A673 (cell line): ENCODE measurements at regions of chr10 and their contacts with region 1.

Region 1: GRCh38 chr10:72772031-72772430 is 80.1 kb downstream of the MCU start:
- DNase-seq: peak; percentile 76
- H3K4me3 ChIP-seq: no peak overlapping the region
- H3K27ac ChIP-seq: peak overlapping the region; percentile 38
- H3K4me1 ChIP-seq: peaks cover 10% of the 10 kb centered on the region
- H3K27me3 ChIP-seq: no peaks in the 10 kb centered on the region
- CTCF ChIP-seq: no peak

Region 2: GRCh38 chr10:72605122-72605521 is 166.9 kb before region 1 on chr10:
- CTCF ChIA-PET with region 1: no interaction called
- POLR2A ChIA-PET with region 1: no interaction called
- intact Hi-C with region 1: no loop called
- DNase-seq: no peak
- H3K4me3 ChIP-seq: no peak overlapping the region
- H3K27ac ChIP-seq: no peak overlapping the region
- H3K4me1 ChIP-seq: no peaks in the 10 kb centered on the region
- H3K27me3 ChIP-seq: no peaks in the 10 kb centered on the region
- CTCF ChIP-seq: no peak

Region 3: DNA sequence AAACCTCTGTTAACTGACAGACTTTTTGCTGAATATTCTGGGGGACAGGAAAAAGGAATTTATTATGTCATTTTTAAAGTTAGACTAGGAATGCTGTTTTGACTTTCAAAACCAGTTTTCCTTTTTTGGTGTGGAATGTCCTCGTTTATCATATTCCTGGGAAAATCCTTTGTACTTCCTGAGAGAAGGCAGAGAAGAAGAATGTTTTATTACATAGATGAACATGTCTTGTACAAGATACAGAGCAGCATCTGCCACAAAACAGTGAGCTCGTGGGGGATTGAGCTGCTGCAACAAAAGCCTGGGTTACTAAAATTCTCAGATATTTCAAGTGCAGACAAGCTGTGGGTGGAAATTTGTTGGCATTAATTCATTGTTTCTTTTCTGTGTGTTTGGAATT is 59.9 kb before region 1 on chr10:
- CTCF ChIA-PET with region 1: no interaction called
- POLR2A ChIA-PET with region 1: no interaction called
- intact Hi-C with region 1: loop called (anchors 5 kb)
- DNase-seq: no peak
- H3K4me3 ChIP-seq: no peak overlapping the region
- H3K27ac ChIP-seq: no peak overlapping the region
- H3K4me1 ChIP-seq: peaks cover 24% of the 10 kb centered on the region
- H3K27me3 ChIP-seq: no peaks in the 10 kb centered on the region
- CTCF ChIP-seq: no peak

Region 4: GRCh38 chr10:72893136-72893798 is 121.2 kb after region 1 on chr10 and contains the start of gene OIT3:
- CTCF ChIA-PET with region 1: no interaction called
- POLR2A ChIA-PET with region 1: no interaction called
- intact Hi-C with region 1: no loop called
- DNase-seq: no peak
- H3K4me3 ChIP-seq: no peak within 1 kb of the TSS
- H3K27ac ChIP-seq: no peak within 1 kb of the TSS
- H3K4me1 ChIP-seq: no peaks in the 10 kb centered on the region
- H3K27me3 ChIP-seq: no peaks in the 10 kb centered on the region
- CTCF ChIP-seq: no peak
- total RNA-seq, gene OIT3: not detected in 2 replicates